ENCODE measurements at regions of chr2 and their contacts with region 1.

Region 1: DNA sequence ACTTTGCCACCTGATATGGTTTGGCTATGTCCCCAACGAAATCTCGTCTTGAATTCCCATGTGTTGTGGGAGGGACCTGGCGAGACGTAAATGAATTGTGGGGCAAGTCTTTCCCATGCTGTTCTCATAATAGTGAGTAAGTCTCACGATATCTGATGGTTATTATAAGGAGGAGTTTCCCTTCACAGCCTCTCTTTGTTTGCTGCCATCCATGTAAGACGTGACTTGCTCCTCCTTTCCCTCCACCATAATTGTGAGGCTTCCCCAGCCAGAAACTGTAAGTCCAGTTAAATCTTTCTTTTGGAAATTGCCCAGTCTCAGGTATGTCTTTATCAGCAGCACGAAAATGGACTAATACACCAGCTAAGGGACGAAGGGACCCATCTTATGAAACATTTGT is 1303.3 kb downstream of the SUCLG1 start:
- DNase-seq: no peak
- H3K4me3 Mint-ChIP-seq: no peak overlapping the region
- H3K27ac Mint-ChIP-seq: no peak overlapping the region
- H3K4me1 Mint-ChIP-seq: no peaks in the 10 kb centered on the region
- H3K27me3 Mint-ChIP-seq: no peaks in the 10 kb centered on the region

Region 2: DNA sequence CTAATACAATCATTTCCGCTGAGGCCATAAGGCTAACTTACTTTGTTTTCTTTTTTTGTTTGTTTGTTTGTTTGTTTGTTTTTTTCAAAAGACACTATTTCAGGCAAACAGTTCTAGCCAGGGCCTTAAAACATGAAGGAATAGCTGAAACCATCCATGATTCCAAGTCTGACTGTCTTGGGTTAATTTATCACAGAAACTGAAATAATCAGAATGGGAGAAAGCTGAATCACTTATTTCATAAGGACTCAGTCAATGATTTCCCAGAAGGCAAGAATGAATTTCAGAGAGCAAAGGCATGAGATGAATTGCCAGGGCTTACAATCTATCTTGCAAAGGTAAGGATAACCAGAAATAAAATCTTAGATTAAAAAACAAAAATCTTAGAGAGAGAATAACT is 11.9 kb before region 1 on chr2:
- CTCF ChIA-PET with region 1: no interaction called
- intact Hi-C with region 1: loop called (anchors 1 kb)
- DNase-seq: no peak
- H3K4me3 Mint-ChIP-seq: no peak overlapping the region
- H3K27ac Mint-ChIP-seq: no peak overlapping the region
- H3K4me1 Mint-ChIP-seq: no peaks in the 10 kb centered on the region
- H3K27me3 Mint-ChIP-seq: no peaks in the 10 kb centered on the region

Measured in activated naive CD4-positive, alpha-beta T cell treated with anti-CD3 and anti-CD28 coated beads for 36 hours (primary cell).